ENCODE measurements at regions of chr2 and their contacts with region 1.

Region 1: GRCh38 chr2:38561691-38562090 is 41.0 kb downstream of the HNRNPLL start:
- DNase-seq: no peak
- ATAC-seq: no peak
- H3K4me3 ChIP-seq: no peak overlapping the region
- H3K27ac ChIP-seq: no peak overlapping the region
- H3K4me1 ChIP-seq: no peaks in the 10 kb centered on the region
- H3K27me3 ChIP-seq: no peaks in the 10 kb centered on the region
- CTCF ChIP-seq: no peak
- EP300 ChIP-seq: no peak
- POLR2A ChIP-seq: no peak
- RAD21 ChIP-seq: no peak

Region 2: DNA sequence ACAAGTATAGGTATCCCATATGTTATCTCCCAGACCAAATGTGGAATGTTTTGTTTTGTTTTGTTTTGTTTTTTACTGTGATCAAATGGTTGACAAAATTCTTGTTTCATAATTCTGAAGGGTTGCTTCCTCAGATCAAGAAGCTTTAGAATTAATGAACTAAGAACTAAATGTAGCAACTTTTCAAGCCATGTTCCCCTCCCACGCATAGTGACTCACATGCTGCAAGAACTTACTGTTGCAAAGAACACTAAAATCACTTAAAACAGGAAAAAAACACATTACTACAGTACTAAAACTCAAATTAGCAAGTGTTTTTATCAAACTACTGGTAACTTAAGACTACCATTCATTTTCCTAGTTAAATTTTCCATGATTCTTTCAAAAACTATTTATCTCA is 10.5 kb after region 1 on chr2:
- CTCF ChIA-PET with region 1: interaction called, 10 read pairs
- POLR2A ChIA-PET with region 1: interaction called, 12 read pairs
- RAD21 ChIA-PET with region 1: interaction called, 3 read pairs
- SMC1A ChIA-PET with region 1: interaction called, 32 read pairs
- in situ Hi-C with region 1: no loop called
- intact Hi-C with region 1: no loop called
- DNase-seq: no peak
- ATAC-seq: no peak
- H3K4me3 ChIP-seq: no peak overlapping the region
- H3K27ac ChIP-seq: no peak overlapping the region
- H3K4me1 ChIP-seq: no peaks in the 10 kb centered on the region
- H3K27me3 ChIP-seq: no peaks in the 10 kb centered on the region
- CTCF ChIP-seq: no peak
- EP300 ChIP-seq: no peak
- POLR2A ChIP-seq: no peak
- RAD21 ChIP-seq: no peak

Measured in GM12878 (cell line).